Transverse colon (tissue), 4 donors: ENCODE measurements at regions of chr14 and their contacts with region 1.

Region 1: DNA sequence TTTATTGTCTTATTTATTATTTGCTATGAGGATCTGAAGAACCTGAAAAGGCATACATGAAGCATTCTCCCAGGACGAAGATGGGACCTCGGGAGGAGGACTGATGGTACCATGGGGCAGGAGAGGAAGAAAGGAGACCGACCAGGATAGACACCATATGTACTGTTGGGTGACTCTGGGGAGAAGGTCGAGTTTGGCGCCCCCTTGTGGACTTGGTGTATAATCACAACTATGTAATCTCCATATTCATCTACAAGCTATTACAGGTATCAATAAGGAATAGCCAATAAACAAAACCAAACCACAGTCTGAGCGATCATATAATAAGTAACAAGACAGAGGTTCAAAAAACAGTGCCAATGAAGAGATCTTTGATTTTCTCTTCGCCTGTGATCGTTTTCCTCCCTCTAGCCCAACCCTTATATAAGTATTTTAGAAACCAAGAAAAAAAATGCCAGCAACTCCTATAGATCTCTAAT is 139.1 kb downstream of the SPTSSA start:
- DNase-seq: peak; percentile 74
- H3K4me3 ChIP-seq: no peak overlapping the region
- H3K27ac ChIP-seq: no peak overlapping the region
- H3K4me1 ChIP-seq: peaks cover 0 to 24% (median 15%) of the 10 kb centered on the region in 4 donors
- H3K27me3 ChIP-seq: no peaks in the 10 kb centered on the region
- CTCF ChIP-seq: peak; percentile 68 to 74 (median 71)
- EP300 ChIP-seq: no peak
- POLR2A ChIP-seq: no peak

Region 2: DNA sequence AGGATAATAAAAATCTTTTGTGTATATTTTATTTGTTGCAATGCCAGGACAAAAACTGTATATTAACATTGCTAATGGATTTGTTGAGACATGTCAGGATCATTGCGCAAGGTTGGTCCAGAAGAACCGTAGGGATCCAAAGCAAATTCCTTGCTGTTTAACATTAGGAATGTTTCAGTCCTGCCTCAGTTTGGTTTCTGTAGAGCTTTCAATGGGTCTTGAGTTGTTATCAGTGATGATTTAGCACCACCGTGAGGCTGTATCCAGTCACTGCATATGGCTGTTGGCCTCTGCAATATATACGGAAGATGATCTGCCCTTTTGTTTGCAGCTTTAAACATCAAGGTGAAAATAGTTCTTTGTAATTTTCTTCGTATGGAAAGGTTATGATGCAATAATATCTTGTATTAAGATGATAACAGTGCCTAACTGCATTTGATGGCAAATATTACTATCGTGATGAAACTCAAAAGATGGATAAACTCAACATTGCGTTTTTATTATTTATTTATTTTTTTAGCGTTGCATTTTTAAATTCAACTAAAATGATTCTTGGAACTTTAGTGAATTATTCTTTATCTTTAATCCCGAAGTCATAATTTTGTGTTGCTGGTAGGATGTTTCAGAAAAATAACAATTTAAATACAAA is 1762.6 kb before region 1 on chr14:
- in situ Hi-C with region 1: loop called in 2 of 4 experiments (anchors 25 kb)
- intact Hi-C with region 1: no loop called
- DNase-seq: peak; percentile 57
- H3K4me3 ChIP-seq: no peak overlapping the region
- H3K27ac ChIP-seq: peak overlapping the region; percentile 48 to 79 (median 63)
- H3K4me1 ChIP-seq: peaks cover 3 to 18% (median 10%) of the 10 kb centered on the region in 4 donors
- H3K27me3 ChIP-seq: no peaks in the 10 kb centered on the region
- CTCF ChIP-seq: peak; percentile 83 to 92 (median 88)
- EP300 ChIP-seq: no peak
- POLR2A ChIP-seq: no peak

Region 3: GRCh38 chr14:34983786-34984185 is 660.8 kb after region 1 on chr14:
- in situ Hi-C with region 1: no loop called
- intact Hi-C with region 1: no loop called
- DNase-seq: no peak
- H3K4me3 ChIP-seq: peak overlapping the region in 3 of 4 donors; percentile 56 to 86 (median 77)
- H3K27ac ChIP-seq: peak overlapping the region; percentile 88 to 99 (median 94)
- H3K4me1 ChIP-seq: peaks cover 5 to 43% (median 25%) of the 10 kb centered on the region in 4 donors
- H3K27me3 ChIP-seq: no peaks in the 10 kb centered on the region
- CTCF ChIP-seq: no peak
- EP300 ChIP-seq: no peak
- POLR2A ChIP-seq: no peak